ENCODE measurements at regions of chr14 and their contacts with region 1.

Region 1: DNA sequence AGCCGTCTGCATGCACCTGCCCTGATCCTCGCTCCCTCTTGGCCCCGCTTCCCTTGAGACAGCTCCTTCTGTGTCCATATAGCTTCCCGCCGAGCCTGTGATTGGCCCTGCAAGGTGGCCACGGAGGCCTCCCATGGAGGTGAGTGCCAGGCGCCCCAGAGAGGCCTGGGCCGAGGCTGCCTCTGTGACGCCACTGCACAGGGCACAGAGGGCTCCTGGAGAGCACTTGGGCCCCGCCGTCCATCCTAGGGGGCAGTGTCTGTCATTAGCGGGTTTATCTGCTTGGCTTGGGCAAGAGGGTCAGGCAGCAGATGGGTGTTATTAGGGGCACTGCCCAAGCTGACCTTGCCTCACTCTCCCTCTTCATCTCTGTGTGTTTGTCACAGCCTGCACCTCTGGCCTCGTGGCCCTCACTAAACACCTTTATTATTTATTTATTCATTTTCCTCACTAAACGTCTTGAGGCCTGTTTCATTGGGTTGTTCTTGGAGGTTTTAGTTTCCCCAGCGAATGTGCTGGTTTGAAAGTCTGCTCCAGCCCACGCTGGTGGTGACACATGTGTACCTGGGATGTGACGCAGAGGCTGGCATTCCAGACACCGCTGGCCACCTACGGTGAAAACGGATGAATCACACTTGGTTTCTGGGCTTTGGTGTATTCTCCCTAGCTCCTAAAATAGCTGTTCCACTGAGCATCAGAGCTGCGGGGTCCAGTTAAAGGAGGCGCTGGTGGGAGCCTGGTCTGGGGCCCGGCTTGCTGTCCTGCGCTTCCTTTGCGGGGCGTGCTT is 5.9 kb downstream of the ZFYVE21 start:
- DNase-seq: peak; percentile 86
- ATAC-seq: peak; percentile 96
- H3K4me3 ChIP-seq: peak overlapping the region in 1 of 2 experiments; percentile 37; a peak in 2 of 4 replicates
- H3K27ac ChIP-seq: peak overlapping the region; percentile 63
- H3K4me1 ChIP-seq: peaks cover 23 to 41% of the 10 kb centered on the region in 2 experiments
- H3K27me3 ChIP-seq: no peaks in the 10 kb centered on the region
- CTCF ChIP-seq: no peak
- POLR2A ChIP-seq: no peak
- RAD21 ChIP-seq: no peak

Region 2: GRCh38 chr14:103606963-103607668 is 114.4 kb before region 1 on chr14:
- CTCF ChIA-PET with region 1: no interaction called
- POLR2A ChIA-PET with region 1: no interaction called
- RAD21 ChIA-PET with region 1: no interaction called
- intact Hi-C with region 1: no loop called
- DNase-seq: no peak
- ATAC-seq: peak; percentile 30; the same call in 1 of the 2 replicates
- H3K4me3 ChIP-seq: no peak overlapping the region
- H3K27ac ChIP-seq: no peak overlapping the region
- H3K4me1 ChIP-seq: no peaks in the 10 kb centered on the region
- H3K27me3 ChIP-seq: no peaks in the 10 kb centered on the region
- CTCF ChIP-seq: peak in 2 of 3 experiments; percentile 9 to 16; a peak in 1 of 6 replicates
- POLR2A ChIP-seq: no peak
- RAD21 ChIP-seq: peak; percentile 41

Region 3: DNA sequence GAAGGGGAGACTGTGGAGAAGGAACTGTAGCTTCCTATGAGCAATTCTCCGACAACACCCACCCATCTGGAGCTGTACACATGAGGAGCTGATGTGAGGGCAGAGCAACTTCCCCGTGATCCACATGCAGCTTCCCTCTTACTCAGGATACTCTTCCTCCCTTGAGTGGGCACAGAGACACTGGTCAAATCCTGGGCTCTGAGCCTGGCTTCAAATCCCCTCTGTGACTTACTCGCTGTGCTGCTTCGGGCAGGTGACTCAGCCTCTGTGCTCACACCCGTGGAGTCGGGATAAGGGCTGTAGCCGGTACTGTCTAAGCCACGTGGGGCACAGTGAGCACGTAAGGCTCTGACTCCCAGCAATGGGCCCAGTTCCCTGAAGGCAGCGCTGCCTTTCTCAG is 25.2 kb after region 1 on chr14:
- CTCF ChIA-PET with region 1: no interaction called
- POLR2A ChIA-PET with region 1: no interaction called
- RAD21 ChIA-PET with region 1: no interaction called
- intact Hi-C with region 1: no loop called
- DNase-seq: no peak
- ATAC-seq: peak; percentile 27; the same call in 1 of the 2 replicates
- H3K4me3 ChIP-seq: no peak overlapping the region
- H3K27ac ChIP-seq: no peak overlapping the region
- H3K4me1 ChIP-seq: no peaks in the 10 kb centered on the region
- H3K27me3 ChIP-seq: no peaks in the 10 kb centered on the region
- CTCF ChIP-seq: no peak
- POLR2A ChIP-seq: no peak
- RAD21 ChIP-seq: no peak

Region 4: GRCh38 chr14:103910262-103910935 is 188.9 kb after region 1 on chr14:
- CTCF ChIA-PET with region 1: no interaction called
- POLR2A ChIA-PET with region 1: no interaction called
- RAD21 ChIA-PET with region 1: no interaction called
- intact Hi-C with region 1: loop called (anchors 1 kb)
- DNase-seq: peak; percentile 86
- ATAC-seq: peak; percentile 100
- H3K4me3 ChIP-seq: 0 out of 4 replicates have a peak overlapping the region, but pooled peaks of 1 of the 2 experiments have one; percentile 4
- H3K27ac ChIP-seq: peak overlapping the region; percentile 49
- H3K4me1 ChIP-seq: peaks cover 5 to 11% of the 10 kb centered on the region in 2 experiments; a peak in 3 of 4 replicates
- H3K27me3 ChIP-seq: no peaks in the 10 kb centered on the region
- CTCF ChIP-seq: peak; percentile 87 to 94 (median 87)
- POLR2A ChIP-seq: no peak
- RAD21 ChIP-seq: peak; percentile 97

Measured in HCT116 (cell line).